Sigmoid colon (tissue), 7 donors: ENCODE measurements at regions of chr15 and their contacts with region 1.

Region 1: GRCh38 chr15:40754883-40755811 is at the start of gene RMDN3:
- DNase-seq: peak; percentile 96
- H3K4me3 ChIP-seq: peak within 1 kb of the TSS; percentile 69 to 95 (median 85)
- H3K27ac ChIP-seq: peak within 1 kb of the TSS; percentile 76 to 84 (median 80)
- H3K4me1 ChIP-seq: peaks cover 0 to 35% (median 25%) of the 10 kb centered on the region in 4 donors
- H3K27me3 ChIP-seq: no peaks in the 10 kb centered on the region
- CTCF ChIP-seq: no peak
- EP300 ChIP-seq: no peak
- POLR2A ChIP-seq: no peak
- total RNA-seq, gene RMDN3: 20.8 to 26.4 (median 22.4) TPM

Region 2: GRCh38 chr15:40633143-40633542 is 122.0 kb before region 1 on chr15:
- intact Hi-C with region 1: no loop called
- DNase-seq: no peak
- H3K4me3 ChIP-seq: no peak overlapping the region
- H3K27ac ChIP-seq: no peak overlapping the region
- H3K4me1 ChIP-seq: no peaks in the 10 kb centered on the region
- H3K27me3 ChIP-seq: no peaks in the 10 kb centered on the region
- CTCF ChIP-seq: no peak
- EP300 ChIP-seq: no peak
- POLR2A ChIP-seq: no peak

Region 3: DNA sequence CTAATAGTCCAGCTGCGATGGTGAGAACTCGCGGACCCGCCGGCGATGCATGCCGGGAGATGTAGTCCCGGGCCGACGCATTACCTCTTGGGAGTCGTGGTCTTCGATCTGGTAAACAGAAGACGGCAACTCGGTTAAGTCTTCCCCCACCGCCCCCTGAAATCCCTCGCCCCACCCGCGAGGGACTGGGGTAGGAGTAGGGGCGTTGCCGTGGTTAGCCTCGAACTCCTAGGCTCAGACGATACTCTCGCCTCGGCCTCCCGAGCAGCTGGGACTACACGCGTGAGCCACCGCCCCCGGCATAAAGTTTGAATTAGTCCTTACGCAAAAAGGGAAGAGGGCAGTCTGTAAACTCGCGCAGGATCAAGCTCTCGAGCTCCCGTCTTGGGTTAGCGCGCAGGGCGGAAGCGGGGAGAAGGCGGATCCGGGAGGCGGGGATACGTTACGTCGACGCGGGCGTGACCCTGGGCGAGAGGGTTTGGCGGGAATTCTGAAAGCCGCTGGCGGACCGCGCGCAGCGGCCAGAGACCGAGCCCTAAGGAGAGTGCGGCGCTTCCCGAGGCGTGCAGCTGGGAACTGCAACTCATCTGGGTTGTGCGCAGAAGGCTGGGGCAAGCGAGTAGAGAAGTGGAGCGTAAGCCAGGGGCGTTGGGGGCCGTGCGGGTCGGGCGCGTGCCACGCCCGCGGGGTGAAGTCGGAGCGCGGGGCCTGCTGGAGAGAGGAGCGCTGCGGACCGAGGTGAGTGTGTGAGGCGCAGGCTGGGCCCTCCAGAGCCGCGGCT is 60.3 kb before region 1 on chr15 and contains the start of gene RAD51:
- intact Hi-C with region 1: loop called (anchors 2 kb)
- DNase-seq: peak; percentile 95
- H3K4me3 ChIP-seq: peak within 1 kb of the TSS; percentile 69 to 89 (median 81)
- H3K27ac ChIP-seq: peak within 1 kb of the TSS; percentile 96 to 100 (median 98)
- H3K4me1 ChIP-seq: peaks cover 0 to 22% (median 20%) of the 10 kb centered on the region in 4 donors
- H3K27me3 ChIP-seq: no peaks in the 10 kb centered on the region
- CTCF ChIP-seq: no peak
- EP300 ChIP-seq: no peak
- POLR2A ChIP-seq: peak; percentile 19 to 52
- total RNA-seq, gene RAD51: 1.1 to 1.5 TPM in 2 of 4 donors, not detected in the others

Region 4: GRCh38 chr15:40857601-40858341 is 102.6 kb after region 1 on chr15:
- intact Hi-C with region 1: no loop called
- DNase-seq: peak; percentile 85
- H3K4me3 ChIP-seq: no peak overlapping the region
- H3K27ac ChIP-seq: no peak overlapping the region
- H3K4me1 ChIP-seq: peaks cover 0 to 8% (median 3%) of the 10 kb centered on the region in 4 donors
- H3K27me3 ChIP-seq: peaks cover 0 to 24% (median 10%) of the 10 kb centered on the region in 3 donors
- CTCF ChIP-seq: peak; percentile 85 to 98 (median 96)
- EP300 ChIP-seq: no peak
- POLR2A ChIP-seq: no peak